ENCODE measurements at regions of chr10 and their contacts with region 1.

Region 1: GRCh38 chr10:50310560-50311174 is 59.4 kb upstream of the ASAH2 start:
- DNase-seq: peak; percentile 54
- H3K4me3 Mint-ChIP-seq: no peak overlapping the region
- H3K27ac Mint-ChIP-seq: peak overlapping the region; percentile 80
- H3K4me1 Mint-ChIP-seq: peaks cover 12% of the 10 kb centered on the region
- H3K27me3 Mint-ChIP-seq: no peaks in the 10 kb centered on the region
- CTCF ChIP-seq: peak; percentile 24

Region 2: GRCh38 chr10:50325449-50326171 is 14.9 kb after region 1 on chr10:
- CTCF ChIA-PET with region 1: interaction called, 11 read pairs
- POLR2A ChIA-PET with region 1: interaction called, 26 read pairs
- intact Hi-C with region 1: no loop called
- DNase-seq: peak; percentile 93
- H3K4me3 Mint-ChIP-seq: peak overlapping the region; percentile 50
- H3K27ac Mint-ChIP-seq: peak overlapping the region; percentile 10
- H3K4me1 Mint-ChIP-seq: peaks cover 44% of the 10 kb centered on the region
- H3K27me3 Mint-ChIP-seq: no peaks in the 10 kb centered on the region
- CTCF ChIP-seq: no peak